Endothelial cell of umbilical vein (primary cell): ENCODE measurements at regions of chr1 and their contacts with region 1.

Region 1: DNA sequence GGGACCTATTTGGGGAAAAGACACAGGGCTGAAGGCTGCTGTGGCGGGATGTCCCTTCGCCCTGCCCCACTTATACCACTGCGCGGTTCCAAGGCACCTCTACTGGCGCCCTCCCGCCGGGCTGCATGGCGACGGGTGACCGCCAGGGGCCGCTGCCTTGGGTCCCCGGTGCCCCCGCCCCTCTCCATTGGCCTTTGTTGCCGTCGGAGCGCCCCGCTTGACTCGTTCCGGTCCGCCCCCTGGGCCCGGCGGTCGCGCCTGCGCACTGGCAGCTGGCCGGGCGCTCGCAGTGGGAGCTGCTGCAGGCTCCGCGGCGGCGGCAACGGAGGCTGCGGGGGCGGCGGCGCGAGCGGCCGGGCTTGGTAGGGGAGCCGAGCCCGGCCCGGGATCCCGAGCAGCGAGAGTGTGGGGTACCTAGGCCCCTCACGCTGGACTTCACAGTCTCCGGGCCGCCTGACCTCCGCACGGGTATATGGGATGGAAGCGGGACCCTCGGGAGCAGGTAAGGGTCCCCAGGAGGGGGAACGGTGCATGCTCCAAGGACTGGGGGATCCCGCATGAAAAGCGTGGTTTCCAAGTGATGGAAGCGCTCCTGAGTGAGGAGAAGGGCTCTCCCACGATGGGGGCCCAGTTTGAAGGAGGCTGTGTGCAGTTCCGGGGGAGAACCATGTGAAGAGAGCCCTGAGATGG is at the start of gene AGO1:
- DNase-seq: peak; percentile 94
- H3K4me3 ChIP-seq: peak within 1 kb of the TSS; percentile 71 to 100 (median 88)
- H3K27ac ChIP-seq: no peak within 1 kb of the TSS
- H3K4me1 ChIP-seq: peaks cover 17% of the 10 kb centered on the region
- H3K27me3 ChIP-seq: no peaks in the 10 kb centered on the region
- CTCF ChIP-seq: peak; percentile 98 to 99
- POLR2A ChIP-seq: peak; percentile 92
- total RNA-seq, gene AGO1: 31.0 TPM in 2 replicates

Region 2: DNA sequence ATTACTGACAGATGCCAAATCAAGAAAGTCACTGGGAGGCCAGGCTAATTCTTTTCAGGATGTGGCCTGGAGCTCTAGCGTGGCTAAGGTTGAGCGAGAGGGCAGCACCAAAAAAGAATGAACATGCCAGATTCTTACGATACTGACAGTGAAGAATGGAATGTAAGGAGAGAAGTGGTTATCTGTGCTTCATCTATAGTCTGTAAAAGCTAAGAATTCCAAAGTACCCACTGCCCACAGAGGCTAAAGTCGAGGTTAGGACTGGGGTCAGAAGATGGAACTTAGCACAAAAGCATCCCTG is 277.3 kb before region 1 on chr1:
- CTCF ChIA-PET with region 1: no interaction called
- POLR2A ChIA-PET with region 1: no interaction called
- dilution Hi-C with region 1: no loop called
- intact Hi-C with region 1: no loop called
- DNase-seq: no peak
- H3K4me3 ChIP-seq: no peak overlapping the region
- H3K27ac ChIP-seq: no peak overlapping the region
- H3K4me1 ChIP-seq: no peaks in the 10 kb centered on the region
- H3K27me3 ChIP-seq: no peaks in the 10 kb centered on the region
- CTCF ChIP-seq: no peak
- POLR2A ChIP-seq: no peak

Region 3: GRCh38 chr1:36088575-36089443 is 205.7 kb after region 1 on chr1 and contains the start of gene ADPRS:
- CTCF ChIA-PET with region 1: interaction called, 4 read pairs
- POLR2A ChIA-PET with region 1: no interaction called
- dilution Hi-C with region 1: no loop called
- intact Hi-C with region 1: loop called (anchors 1 kb)
- DNase-seq: peak; percentile 91
- H3K4me3 ChIP-seq: peak within 1 kb of the TSS; percentile 68 to 96 (median 83)
- H3K27ac ChIP-seq: peak within 1 kb of the TSS; percentile 35
- H3K4me1 ChIP-seq: peaks cover 8% of the 10 kb centered on the region
- H3K27me3 ChIP-seq: no peaks in the 10 kb centered on the region
- CTCF ChIP-seq: peak; percentile 98 to 100
- POLR2A ChIP-seq: peak; percentile 95
- total RNA-seq, gene ADPRS: 32.9 and 33.9 TPM in 2 replicates